Activated CD8-positive, alpha-beta memory T cell treated with anti-CD3 and anti-CD28 coated beads, Interleukin-2, amount 10 ng/mL, durations not matched to agents 7 days and 5 days (primary cell): ENCODE measurements at regions of chr6 and their contacts with region 1.

Region 1: DNA sequence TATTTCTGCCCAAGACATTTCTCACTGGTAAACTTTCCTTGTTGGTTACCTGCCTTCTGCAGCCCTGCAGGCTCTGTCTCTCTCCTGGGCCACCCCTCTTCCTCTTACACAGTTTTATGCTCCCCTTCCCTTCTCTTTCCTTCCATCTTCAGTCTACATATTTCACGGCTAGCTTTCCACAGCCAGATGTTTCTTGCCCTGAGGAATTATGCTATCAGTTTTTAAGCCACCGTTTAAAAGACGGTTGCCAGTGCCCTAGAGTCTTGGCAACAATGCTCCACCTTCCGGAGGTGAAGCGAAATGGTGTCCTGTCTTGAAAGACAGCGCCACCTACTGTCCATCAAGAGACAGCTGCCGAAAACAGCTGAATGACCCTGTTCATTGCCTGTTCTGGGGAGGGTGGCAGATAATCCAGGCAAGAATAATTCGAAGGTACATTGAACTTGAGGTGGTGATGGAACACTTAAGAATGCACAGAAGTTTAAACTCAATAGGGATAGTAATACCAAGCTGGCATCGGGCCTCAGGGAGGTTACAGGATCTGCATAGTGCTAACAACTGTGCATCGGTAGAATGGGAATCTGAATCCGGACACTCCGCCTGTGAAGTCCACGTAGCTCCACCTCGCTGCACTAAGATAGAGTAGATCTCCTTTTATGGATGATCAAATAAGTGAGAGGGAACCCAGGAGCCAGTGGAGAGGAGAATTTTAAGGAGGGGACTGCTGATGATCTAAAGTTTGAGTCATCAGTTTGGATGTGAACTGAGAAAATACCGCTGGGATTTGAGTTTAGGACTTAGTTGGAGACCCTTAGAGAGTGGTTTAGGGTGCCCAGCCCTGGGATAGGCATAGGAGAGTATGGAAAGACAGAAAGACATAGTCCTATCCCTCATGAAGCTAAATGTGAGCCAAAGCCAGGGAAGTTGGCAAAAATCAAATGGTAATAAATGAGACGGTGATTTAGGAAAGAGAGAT is 4.8 kb upstream of the TRIM40 start:
- DNase-seq: peak; percentile 81
- ATAC-seq: peak; percentile 97
- H3K4me3 Mint-ChIP-seq: no peak overlapping the region
- H3K27ac Mint-ChIP-seq: peak overlapping the region; percentile 5
- H3K4me1 Mint-ChIP-seq: peaks cover 19% of the 10 kb centered on the region
- H3K27me3 Mint-ChIP-seq: peaks cover 84% of the 10 kb centered on the region

Region 2: DNA sequence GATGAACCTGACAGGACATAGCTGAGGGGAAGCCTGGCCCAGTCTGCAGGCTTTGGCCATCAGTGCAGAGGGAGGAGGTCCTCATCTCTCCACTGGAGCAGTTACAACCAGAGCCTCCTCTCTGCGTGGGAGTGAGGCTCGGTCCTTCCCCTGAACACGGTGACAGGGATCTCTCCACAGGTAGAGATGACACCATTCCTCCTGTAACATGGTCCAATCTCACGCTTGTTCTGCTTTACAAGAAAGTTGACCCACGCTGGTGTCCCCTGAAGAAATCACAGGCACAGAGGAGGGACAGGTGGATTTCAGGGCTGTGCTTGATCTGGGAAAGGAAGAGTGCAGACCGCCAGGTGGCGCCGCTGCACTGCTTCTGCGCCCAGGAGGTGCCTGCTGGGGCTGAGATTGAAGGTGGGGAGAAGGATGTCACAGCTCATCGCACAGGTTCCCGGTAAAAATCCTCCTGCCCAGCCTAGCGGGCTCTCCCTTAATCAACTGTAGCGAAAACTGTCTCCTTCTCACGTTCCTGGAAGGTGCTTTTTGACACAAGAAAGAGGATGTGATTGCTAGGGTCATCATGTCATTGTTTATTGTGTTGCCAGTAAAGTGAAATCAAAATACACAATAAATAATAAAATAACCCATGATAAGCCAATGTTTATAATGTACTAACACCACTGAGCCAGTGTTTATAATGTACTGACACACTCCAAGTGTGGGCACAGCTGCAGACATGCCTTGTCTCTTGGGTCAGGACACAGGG is 283.1 kb before region 1 on chr6:
- CTCF ChIA-PET with region 1: interaction called, 13 read pairs
- DNase-seq: peak; percentile 87
- ATAC-seq: peak; percentile 83
- H3K4me3 Mint-ChIP-seq: no peak overlapping the region
- H3K27ac Mint-ChIP-seq: no peak overlapping the region
- H3K4me1 Mint-ChIP-seq: peaks cover 23% of the 10 kb centered on the region
- H3K27me3 Mint-ChIP-seq: peaks cover 70% of the 10 kb centered on the region

Region 3: DNA sequence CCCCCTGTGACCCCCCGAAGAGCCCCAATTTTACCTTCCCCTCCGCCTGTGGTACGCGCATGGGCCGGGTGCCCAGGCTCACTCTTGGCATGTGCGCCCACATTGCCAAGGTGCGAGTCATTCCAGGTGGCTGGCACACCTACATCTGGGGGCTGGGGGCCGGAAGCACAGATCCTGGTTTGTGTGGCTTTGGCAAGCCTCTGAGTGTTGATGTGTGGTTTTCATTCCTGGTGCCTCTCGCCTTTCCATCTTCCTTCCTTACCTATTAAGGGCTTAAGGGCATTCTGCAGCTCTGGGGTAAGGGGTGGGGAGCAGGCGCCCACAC is 55.2 kb before region 1 on chr6:
- CTCF ChIA-PET with region 1: interaction called, 12 read pairs
- DNase-seq: no peak
- ATAC-seq: no peak
- H3K4me3 Mint-ChIP-seq: no peak overlapping the region
- H3K27ac Mint-ChIP-seq: no peak overlapping the region
- H3K4me1 Mint-ChIP-seq: peaks cover 39% of the 10 kb centered on the region
- H3K27me3 Mint-ChIP-seq: peaks cover 85% of the 10 kb centered on the region

Region 4: DNA sequence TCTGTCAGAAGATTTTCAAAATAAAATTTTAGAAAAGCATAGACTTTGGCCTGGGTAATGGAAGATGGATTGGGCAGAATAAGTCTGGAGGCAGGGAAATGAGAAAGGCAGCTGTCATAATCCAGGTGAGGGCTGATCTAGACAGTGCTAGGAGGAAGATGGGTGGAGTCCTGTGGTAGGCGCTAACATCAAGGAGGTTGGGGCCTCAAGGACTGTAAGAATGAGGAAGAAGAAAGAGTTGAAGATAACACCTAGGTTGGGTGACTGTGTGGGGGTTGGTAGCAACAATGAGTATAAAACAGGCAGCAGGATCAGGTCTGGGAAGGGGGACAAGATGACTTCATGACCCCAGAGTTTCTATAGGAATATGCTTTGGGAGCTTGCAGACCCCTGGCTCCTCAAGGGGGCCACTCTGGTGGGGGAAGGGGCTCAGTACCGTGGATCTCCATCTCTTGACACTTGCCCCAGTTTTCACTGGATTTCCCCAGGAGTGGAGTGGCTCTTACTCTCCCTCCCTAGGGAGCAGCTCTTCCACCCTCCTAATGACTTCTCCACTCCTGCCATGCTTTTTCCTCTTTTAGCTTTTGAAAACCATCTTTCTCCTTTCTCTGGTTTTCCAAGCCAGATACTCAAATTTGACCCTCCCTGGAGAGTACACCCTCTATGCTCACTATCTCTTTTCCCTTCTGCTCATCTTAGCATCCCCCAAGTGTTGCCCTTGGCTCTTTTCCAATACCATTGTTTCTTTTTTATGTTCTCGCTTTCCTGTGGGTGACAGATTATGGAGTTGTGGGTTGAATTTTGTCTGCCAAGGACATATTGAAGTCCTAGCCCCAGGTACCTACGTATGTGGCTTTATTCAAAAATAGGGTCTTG is 33.0 kb before region 1 on chr6:
- CTCF ChIA-PET with region 1: interaction called, 234 read pairs
- DNase-seq: no peak
- ATAC-seq: no peak
- H3K4me3 Mint-ChIP-seq: no peak overlapping the region
- H3K27ac Mint-ChIP-seq: no peak overlapping the region
- H3K4me1 Mint-ChIP-seq: peaks cover 31% of the 10 kb centered on the region
- H3K27me3 Mint-ChIP-seq: peaks cover 82% of the 10 kb centered on the region

Region 5: DNA sequence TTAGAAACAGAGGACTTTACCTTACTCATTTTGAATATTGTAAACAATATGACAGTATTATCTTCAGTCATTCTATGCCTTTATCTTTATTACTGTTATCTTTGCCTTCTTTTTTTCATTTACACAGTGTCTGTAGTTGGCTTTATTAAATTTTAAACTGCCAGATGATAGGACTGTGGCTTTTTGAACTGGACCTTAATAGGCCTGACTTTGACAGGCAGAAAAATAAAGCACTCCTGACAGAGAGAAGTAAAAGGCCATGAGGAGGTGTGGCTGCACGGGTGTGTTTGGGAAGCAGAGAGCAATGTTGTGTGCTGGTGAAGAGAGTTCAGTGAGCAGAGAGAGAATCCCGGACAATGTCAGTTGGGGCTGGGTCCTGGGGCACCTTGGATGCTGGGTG is 12.6 kb after region 1 on chr6:
- CTCF ChIA-PET with region 1: interaction called, 30 read pairs
- DNase-seq: no peak
- ATAC-seq: no peak
- H3K4me3 Mint-ChIP-seq: no peak overlapping the region
- H3K27ac Mint-ChIP-seq: no peak overlapping the region
- H3K4me1 Mint-ChIP-seq: peaks cover 2% of the 10 kb centered on the region
- H3K27me3 Mint-ChIP-seq: peaks cover 80% of the 10 kb centered on the region

Region 6: GRCh38 chr6:30167101-30167500 is 35.9 kb after region 1 on chr6:
- CTCF ChIA-PET with region 1: interaction called, 11 read pairs
- DNase-seq: no peak
- ATAC-seq: no peak
- H3K4me3 Mint-ChIP-seq: no peak overlapping the region
- H3K27ac Mint-ChIP-seq: no peak overlapping the region
- H3K4me1 Mint-ChIP-seq: peaks cover 33% of the 10 kb centered on the region
- H3K27me3 Mint-ChIP-seq: peaks cover 49% of the 10 kb centered on the region